ENCODE measurements at regions of chr11 and their contacts with region 1.

Region 1: GRCh38 chr11:59822989-59823566 is 12.5 kb upstream of the MRPL16 start:
- DNase-seq: peak; percentile 44
- ATAC-seq: peak; percentile 71
- H3K4me3 Mint-ChIP-seq: no peak overlapping the region
- H3K27ac Mint-ChIP-seq: no peak overlapping the region
- H3K4me1 Mint-ChIP-seq: peaks cover 11% of the 10 kb centered on the region
- H3K27me3 Mint-ChIP-seq: no peaks in the 10 kb centered on the region

Region 2: GRCh38 chr11:59918987-59919589 is 96.0 kb after region 1 on chr11:
- CTCF ChIA-PET with region 1: interaction called, 7 read pairs
- POLR2A ChIA-PET with region 1: no interaction called
- intact Hi-C with region 1: loop called (anchors 1 to 2 kb)
- DNase-seq: peak; percentile 37
- ATAC-seq: peak; percentile 44
- H3K4me3 Mint-ChIP-seq: no peak overlapping the region
- H3K27ac Mint-ChIP-seq: no peak overlapping the region
- H3K4me1 Mint-ChIP-seq: no peaks in the 10 kb centered on the region
- H3K27me3 Mint-ChIP-seq: peaks cover 2% of the 10 kb centered on the region

Region 3: GRCh38 chr11:60130496-60130895 is 307.4 kb after region 1 on chr11:
- CTCF ChIA-PET with region 1: interaction called, 4 read pairs
- POLR2A ChIA-PET with region 1: no interaction called
- intact Hi-C with region 1: loop called (anchors 1 kb)
- DNase-seq: peak; percentile 25
- ATAC-seq: peak; percentile 71
- H3K4me3 Mint-ChIP-seq: no peak overlapping the region
- H3K27ac Mint-ChIP-seq: no peak overlapping the region
- H3K4me1 Mint-ChIP-seq: no peaks in the 10 kb centered on the region
- H3K27me3 Mint-ChIP-seq: peaks cover 2% of the 10 kb centered on the region

Region 4: DNA sequence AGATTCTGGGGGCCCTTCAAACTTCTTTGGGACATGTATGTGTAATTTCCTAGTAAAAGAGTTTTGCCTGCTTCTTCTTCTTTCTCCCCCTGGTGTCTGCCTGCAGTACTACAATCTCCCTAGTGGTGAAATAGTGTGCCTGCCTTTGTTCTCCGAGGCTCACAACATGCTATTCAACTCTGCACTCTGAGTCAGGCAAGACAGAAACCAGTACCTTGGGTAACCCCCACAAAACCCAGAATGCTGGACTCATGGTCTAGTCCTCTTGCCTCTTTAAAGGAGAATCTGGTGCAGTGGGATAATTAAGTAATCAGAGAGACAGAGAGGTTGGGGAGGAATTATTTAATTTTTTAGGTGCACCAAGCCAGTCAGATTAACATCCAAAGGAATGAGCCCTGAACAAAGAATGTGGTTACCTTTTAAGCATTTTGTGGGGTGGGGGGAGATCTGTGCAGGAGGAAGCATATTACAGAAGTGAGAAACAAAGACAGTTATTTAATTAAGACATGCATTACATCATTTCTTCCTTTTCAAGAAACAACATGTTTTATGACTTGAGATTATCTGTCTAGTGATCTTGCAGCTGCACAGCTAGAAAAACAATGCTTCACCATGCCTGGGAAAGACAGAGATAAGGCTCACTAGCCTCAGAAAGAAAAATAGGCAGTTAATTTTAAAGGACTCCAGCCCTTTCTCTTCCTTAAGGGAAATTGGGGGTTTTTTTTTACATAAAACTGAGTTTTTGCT is 370.8 kb after region 1 on chr11:
- CTCF ChIA-PET with region 1: interaction called, 3 read pairs
- POLR2A ChIA-PET with region 1: no interaction called
- intact Hi-C with region 1: loop called in 1 of 2 experiments (anchors 10 kb)
- DNase-seq: peak; percentile 83
- ATAC-seq: peak; percentile 99
- H3K4me3 Mint-ChIP-seq: no peak overlapping the region
- H3K27ac Mint-ChIP-seq: no peak overlapping the region
- H3K4me1 Mint-ChIP-seq: peaks cover 20% of the 10 kb centered on the region
- H3K27me3 Mint-ChIP-seq: peaks cover 19% of the 10 kb centered on the region

Region 5: GRCh38 chr11:60251485-60252212 is 428.6 kb after region 1 on chr11:
- CTCF ChIA-PET with region 1: interaction called, 4 read pairs
- POLR2A ChIA-PET with region 1: no interaction called
- intact Hi-C with region 1: loop called in 1 of 2 experiments (anchors 1 kb)
- DNase-seq: peak; percentile 52
- ATAC-seq: no peak
- H3K4me3 Mint-ChIP-seq: no peak overlapping the region
- H3K27ac Mint-ChIP-seq: no peak overlapping the region
- H3K4me1 Mint-ChIP-seq: no peaks in the 10 kb centered on the region
- H3K27me3 Mint-ChIP-seq: peaks cover 35% of the 10 kb centered on the region